ENCODE measurements at regions of chr20 and their contacts with region 1.

Region 1: GRCh38 chr20:19875331-19876221 is 117.5 kb downstream of the RIN2 start:
- DNase-seq: no peak
- H3K4me3 ChIP-seq: no peak overlapping the region
- H3K27ac ChIP-seq: peak overlapping the region in 1 of 2 donors; percentile 11
- H3K4me1 ChIP-seq: peaks cover 14% of the 10 kb centered on the region
- H3K27me3 ChIP-seq: no peaks in the 10 kb centered on the region
- CTCF ChIP-seq: no peak
- EP300 ChIP-seq: no peak
- POLR2A ChIP-seq: no peak

Region 2: GRCh38 chr20:19794941-19795340 is 80.6 kb before region 1 on chr20:
- intact Hi-C with region 1: loop called in 1 of 4 experiments (anchors 10 kb)
- DNase-seq: no peak
- H3K4me3 ChIP-seq: no peak overlapping the region
- H3K27ac ChIP-seq: no peak overlapping the region
- H3K4me1 ChIP-seq: peaks cover 6% of the 10 kb centered on the region
- H3K27me3 ChIP-seq: no peaks in the 10 kb centered on the region
- CTCF ChIP-seq: no peak
- EP300 ChIP-seq: no peak
- POLR2A ChIP-seq: no peak

Measured in ovary (tissue), 10 donors.